ENCODE measurements at regions of chr9 and their contacts with region 1.

Region 1: GRCh38 chr9:12329623-12329985 is 363.6 kb upstream of the TYRP1 start:
- DNase-seq: no peak
- H3K4me3 ChIP-seq: 0 out of 4 replicates have a peak overlapping the region, but pooled peaks of 1 of the 2 experiments have one; percentile 8
- H3K27ac ChIP-seq: no peak overlapping the region
- H3K4me1 ChIP-seq: peaks cover 0 to 2% of the 10 kb centered on the region in 2 experiments; a peak in 1 of 4 replicates
- H3K27me3 ChIP-seq: no peaks in the 10 kb centered on the region
- CTCF ChIP-seq: no peak
- EP300 ChIP-seq: no peak
- RAD21 ChIP-seq: no peak

Region 2: DNA sequence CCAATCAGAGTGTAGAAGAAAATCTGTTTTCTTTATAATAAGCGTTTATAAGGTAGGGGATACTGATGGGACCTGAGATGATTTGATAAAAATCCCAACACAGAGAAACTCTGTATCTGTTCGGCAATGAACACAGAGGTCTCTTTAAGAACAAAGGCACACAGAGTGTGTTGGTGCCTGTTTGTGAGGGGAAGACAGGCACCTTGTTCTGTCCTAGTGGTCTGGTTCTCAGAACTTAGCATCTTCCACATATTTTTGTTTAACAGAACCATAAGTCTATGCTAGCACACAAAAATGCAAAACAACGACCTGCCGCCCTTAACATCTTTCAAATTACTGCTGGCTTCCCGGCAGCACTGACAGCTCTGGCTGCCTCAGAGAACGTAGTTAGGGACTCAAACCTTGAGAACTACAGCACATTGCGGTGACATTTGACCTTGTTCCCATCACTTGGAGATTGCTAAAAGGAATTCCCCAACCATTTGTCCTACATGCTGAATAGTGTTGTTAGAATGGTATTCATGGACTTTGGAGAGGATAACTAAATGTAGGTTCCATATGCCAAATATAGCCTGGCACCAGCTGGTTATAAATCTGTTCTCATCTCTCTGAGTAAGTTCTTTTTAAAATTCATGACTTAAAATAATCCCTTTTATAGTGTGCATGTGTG is 508.2 kb before region 1 on chr9:
- CTCF ChIA-PET with region 1: no interaction called
- POLR2A ChIA-PET with region 1: no interaction called
- DNase-seq: no peak
- H3K4me3 ChIP-seq: no peak overlapping the region
- H3K27ac ChIP-seq: no peak overlapping the region
- H3K4me1 ChIP-seq: no peaks in the 10 kb centered on the region
- H3K27me3 ChIP-seq: no peaks in the 10 kb centered on the region
- CTCF ChIP-seq: no peak
- EP300 ChIP-seq: no peak
- RAD21 ChIP-seq: no peak

Region 3: GRCh38 chr9:12318732-12319685 is 10.6 kb before region 1 on chr9:
- CTCF ChIA-PET with region 1: interaction called, 10 read pairs
- POLR2A ChIA-PET with region 1: no interaction called
- DNase-seq: no peak
- H3K4me3 ChIP-seq: no peak overlapping the region
- H3K27ac ChIP-seq: no peak overlapping the region
- H3K4me1 ChIP-seq: no peaks in the 10 kb centered on the region
- H3K27me3 ChIP-seq: no peaks in the 10 kb centered on the region
- CTCF ChIP-seq: no peak
- EP300 ChIP-seq: no peak
- RAD21 ChIP-seq: no peak

Region 4: GRCh38 chr9:12351293-12352044 is 21.9 kb after region 1 on chr9:
- CTCF ChIA-PET with region 1: interaction called, 13 read pairs
- POLR2A ChIA-PET with region 1: no interaction called
- DNase-seq: no peak
- H3K4me3 ChIP-seq: no peak overlapping the region
- H3K27ac ChIP-seq: no peak overlapping the region
- H3K4me1 ChIP-seq: no peaks in the 10 kb centered on the region
- H3K27me3 ChIP-seq: no peaks in the 10 kb centered on the region
- CTCF ChIP-seq: no peak
- EP300 ChIP-seq: no peak
- RAD21 ChIP-seq: no peak

Region 5: GRCh38 chr9:12640016-12640587 is 310.5 kb after region 1 on chr9:
- CTCF ChIA-PET with region 1: interaction called, 17 read pairs
- POLR2A ChIA-PET with region 1: no interaction called
- DNase-seq: peak; percentile 5
- H3K4me3 ChIP-seq: no peak overlapping the region; a peak in 1 of 4 replicates
- H3K27ac ChIP-seq: no peak overlapping the region
- H3K4me1 ChIP-seq: no peaks in the 10 kb centered on the region
- H3K27me3 ChIP-seq: no peaks in the 10 kb centered on the region
- CTCF ChIP-seq: peak; percentile 64
- EP300 ChIP-seq: no peak
- RAD21 ChIP-seq: peak; percentile 81

Measured in SK-N-SH (cell line).